Ascending aorta (tissue), 2 donors: ENCODE measurements at regions of chr3 and their contacts with region 1.

Region 1: DNA sequence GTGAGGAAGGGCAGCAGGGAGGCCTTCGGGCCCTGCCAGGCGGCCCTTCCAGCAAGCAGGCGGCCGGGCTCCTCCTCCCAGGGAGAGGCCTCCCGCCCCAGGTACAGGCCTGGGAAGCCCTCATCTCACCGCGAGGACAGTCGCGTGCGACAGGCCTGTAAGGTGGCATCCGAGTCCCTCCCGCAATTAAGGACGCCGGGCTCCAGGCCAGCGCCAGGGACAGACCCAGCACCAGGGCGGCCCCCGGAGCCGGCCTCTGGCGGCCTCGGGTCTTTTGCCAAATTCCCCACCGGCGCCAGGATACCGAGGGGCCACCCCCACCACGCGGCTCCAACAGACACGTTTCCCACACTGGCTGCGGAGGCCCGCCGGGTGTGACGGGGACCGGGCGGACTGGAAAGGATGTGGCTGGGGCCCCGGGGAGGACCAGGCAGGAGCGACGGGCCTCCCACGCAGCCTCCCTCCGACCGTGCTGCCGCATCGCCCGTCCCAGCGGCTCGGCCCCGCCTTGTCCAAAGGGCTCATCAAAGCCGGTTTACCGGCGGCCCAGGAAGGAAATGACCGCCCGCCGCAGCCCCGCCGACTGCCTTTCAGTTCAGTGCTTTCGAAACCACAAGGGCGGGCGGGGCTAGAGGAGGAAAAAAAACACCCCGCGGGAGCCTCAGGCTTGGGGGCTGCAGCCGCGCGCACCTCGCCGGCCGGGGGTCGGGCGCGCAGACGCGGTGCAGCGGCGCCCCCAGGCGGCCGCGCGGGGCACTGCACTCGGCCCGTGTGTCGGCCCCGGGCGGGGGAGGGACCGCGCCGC is 11.3 kb downstream of the XXYLT1 start:
- DNase-seq: peak; percentile 50 to 95
- H3K4me3 ChIP-seq: peak overlapping the region; percentile 77 to 84
- H3K27ac ChIP-seq: peak overlapping the region; percentile 80 to 86
- H3K4me1 ChIP-seq: peaks cover 0 to 15% of the 10 kb centered on the region in 2 donors
- H3K27me3 ChIP-seq: no peaks in the 10 kb centered on the region
- CTCF ChIP-seq: peak in 1 of 3 experiments; percentile 100

Region 2: DNA sequence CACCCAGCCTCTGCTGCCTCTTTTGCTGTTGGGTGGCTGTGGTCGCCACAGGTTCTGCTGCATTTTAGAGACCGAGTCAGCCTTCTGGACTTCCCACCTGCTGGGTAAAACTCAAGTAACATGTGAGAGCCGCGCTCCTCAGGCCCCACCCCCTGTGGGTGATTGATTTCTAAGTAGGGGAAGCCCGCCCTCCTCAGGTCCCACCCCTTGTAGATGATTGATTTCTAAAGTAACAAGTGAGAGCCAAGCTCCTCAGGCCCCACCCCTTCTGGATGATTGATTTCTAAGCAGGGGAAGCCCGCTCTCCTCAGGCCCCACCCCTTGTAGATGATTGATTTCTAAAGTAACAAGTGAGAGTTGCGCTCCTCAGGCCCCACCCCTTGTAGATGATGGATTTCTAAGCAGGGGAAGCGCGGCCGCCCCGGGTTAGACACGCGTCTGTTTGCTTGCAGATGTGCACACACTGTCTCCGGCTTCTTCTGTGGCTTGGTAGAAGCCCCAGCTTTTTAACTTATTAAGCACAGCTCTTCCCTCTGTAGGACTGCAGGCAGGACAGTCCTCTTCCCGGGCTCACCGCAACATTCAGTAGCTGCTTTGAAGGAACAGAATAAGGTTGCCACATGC is 490.5 kb before region 1 on chr3:
- intact Hi-C with region 1: loop called (anchors 10 kb)
- DNase-seq: peak; percentile 85 to 95
- H3K4me3 ChIP-seq: peak overlapping the region; percentile 36 to 62
- H3K27ac ChIP-seq: no peak overlapping the region
- H3K4me1 ChIP-seq: peaks cover 0 to 9% of the 10 kb centered on the region in 2 donors
- H3K27me3 ChIP-seq: no peaks in the 10 kb centered on the region
- CTCF ChIP-seq: no peak

Region 3: GRCh38 chr3:195106418-195106906 is 153.2 kb before region 1 on chr3:
- intact Hi-C with region 1: loop called (anchors 1 kb)
- DNase-seq: peak in 1 of 2 donors; percentile 80
- H3K4me3 ChIP-seq: peak overlapping the region in 1 of 2 donors; percentile 40
- H3K27ac ChIP-seq: no peak overlapping the region
- H3K4me1 ChIP-seq: peaks cover 0 to 5% of the 10 kb centered on the region in 2 donors
- H3K27me3 ChIP-seq: no peaks in the 10 kb centered on the region
- CTCF ChIP-seq: peak; percentile 96 to 100 (median 100)

Region 4: GRCh38 chr3:195172039-195172684 is 87.5 kb before region 1 on chr3:
- intact Hi-C with region 1: loop called (anchors 5 kb)
- DNase-seq: peak in 1 of 2 donors; percentile 79
- H3K4me3 ChIP-seq: peak overlapping the region in 1 of 2 donors; percentile 37
- H3K27ac ChIP-seq: peak overlapping the region in 1 of 2 donors; percentile 41
- H3K4me1 ChIP-seq: peaks cover 7 to 16% of the 10 kb centered on the region in 2 donors
- H3K27me3 ChIP-seq: no peaks in the 10 kb centered on the region
- CTCF ChIP-seq: no peak

Region 5: GRCh38 chr3:195238586-195239118 is 21.0 kb before region 1 on chr3:
- intact Hi-C with region 1: loop called (anchors 1 kb)
- DNase-seq: no peak
- H3K4me3 ChIP-seq: no peak overlapping the region
- H3K27ac ChIP-seq: no peak overlapping the region
- H3K4me1 ChIP-seq: peaks cover 0 to 12% of the 10 kb centered on the region in 2 donors
- H3K27me3 ChIP-seq: no peaks in the 10 kb centered on the region
- CTCF ChIP-seq: no peak